H1 (cell line): ENCODE measurements at regions of chr11 and their contacts with region 1.

Region 1: DNA sequence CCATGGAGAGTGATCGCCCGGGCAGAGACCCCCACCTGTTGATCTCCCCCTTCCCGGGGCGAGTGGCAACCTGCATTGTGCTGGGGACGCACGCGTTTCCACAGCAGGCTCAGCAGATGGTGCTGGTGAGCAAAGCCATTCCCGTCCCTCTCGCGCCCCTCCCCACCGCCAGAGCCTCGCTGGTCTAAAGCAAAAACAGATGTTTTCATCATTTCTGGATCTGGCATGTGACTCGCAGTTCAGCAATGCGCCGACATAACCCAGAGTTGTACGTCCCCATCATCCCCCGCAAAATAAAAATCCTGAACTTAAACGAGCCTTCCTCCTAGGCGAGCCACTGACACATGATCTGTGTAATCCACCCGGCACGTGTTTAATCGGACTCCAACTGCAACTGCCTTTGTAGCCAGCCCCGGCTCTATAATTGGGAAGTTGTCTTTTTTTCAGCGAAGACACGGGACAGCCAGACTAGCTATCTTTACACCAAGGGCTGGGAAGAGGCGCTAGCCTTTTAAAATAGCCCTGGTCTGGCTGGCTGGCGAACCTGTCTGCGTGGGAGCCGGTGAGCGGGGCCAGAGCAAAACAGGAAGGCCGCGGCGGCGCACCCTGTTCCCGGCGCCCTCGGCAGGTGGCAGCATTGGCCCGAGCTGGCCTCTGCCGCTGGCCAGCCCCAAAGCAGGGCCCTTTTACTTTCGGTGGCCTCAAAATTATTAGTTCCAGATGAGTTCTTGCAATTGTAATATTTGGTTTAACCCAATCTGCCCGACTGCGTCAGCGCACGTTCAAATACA is 203.0 kb upstream of the SORL1-AS1 start:
- DNase-seq: peak in 1 of 2 experiments; percentile 94
- H3K4me3 ChIP-seq: peak overlapping the region; percentile 19 to 60 (median 34); a peak in 7 of 8 replicates
- H3K27ac ChIP-seq: no peak overlapping the region
- H3K4me1 ChIP-seq: peaks cover 7 to 13% (median 11%) of the 10 kb centered on the region in 4 experiments
- H3K27me3 ChIP-seq: no peaks in the 10 kb centered on the region
- CTCF ChIP-seq: peak; percentile 85 to 97 (median 90)
- EP300 ChIP-seq: no peak
- POLR2A ChIP-seq: no peak
- RAD21 ChIP-seq: peak; percentile 97 to 98

Region 2: GRCh38 chr11:121757480-121758125 is 101.9 kb after region 1 on chr11:
- CTCF ChIA-PET with region 1: interaction called, 28 read pairs
- POLR2A ChIA-PET with region 1: no interaction called
- DNase-seq: no peak
- H3K4me3 ChIP-seq: no peak overlapping the region
- H3K27ac ChIP-seq: no peak overlapping the region
- H3K4me1 ChIP-seq: peaks cover 2 to 11% (median 8%) of the 10 kb centered on the region in 4 experiments; a peak in 6 of 7 replicates
- H3K27me3 ChIP-seq: no peaks in the 10 kb centered on the region
- CTCF ChIP-seq: no peak
- EP300 ChIP-seq: no peak
- POLR2A ChIP-seq: no peak
- RAD21 ChIP-seq: peak in 1 of 2 experiments; percentile 30; a peak in 2 of 4 replicates

Region 3: DNA sequence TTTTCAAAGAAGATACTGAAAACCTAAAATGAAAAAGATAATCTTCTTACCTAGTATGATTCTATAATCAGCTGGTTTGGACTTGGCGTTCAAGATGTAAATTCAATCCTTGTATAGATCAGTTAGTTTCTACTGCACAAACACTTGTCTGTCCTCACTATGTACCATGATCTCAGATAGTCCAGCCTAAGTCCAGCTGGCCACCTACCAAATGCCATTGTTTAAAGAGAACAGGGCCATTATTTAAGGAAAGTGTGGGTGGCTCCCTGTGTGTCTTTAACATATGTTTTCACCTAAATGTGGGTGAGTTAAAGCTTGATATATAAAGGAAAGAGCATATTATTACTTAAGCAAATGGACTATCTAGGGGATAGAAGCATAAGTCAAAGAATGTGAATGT is 421.7 kb after region 1 on chr11:
- CTCF ChIA-PET with region 1: interaction called, 15 read pairs
- POLR2A ChIA-PET with region 1: no interaction called
- DNase-seq: no peak
- H3K4me3 ChIP-seq: no peak overlapping the region
- H3K27ac ChIP-seq: no peak overlapping the region
- H3K4me1 ChIP-seq: no peaks in the 10 kb centered on the region
- H3K27me3 ChIP-seq: peaks cover 0 to 1% (median 0%) of the 10 kb centered on the region in 4 experiments; a peak in 1 of 7 replicates
- CTCF ChIP-seq: no peak
- EP300 ChIP-seq: no peak
- POLR2A ChIP-seq: no peak
- RAD21 ChIP-seq: no peak

Region 4: GRCh38 chr11:122115524-122116379 is 460.0 kb after region 1 on chr11 and contains the start of gene BLID:
- CTCF ChIA-PET with region 1: interaction called, 14 read pairs
- POLR2A ChIA-PET with region 1: no interaction called
- DNase-seq: peak in 1 of 2 experiments; percentile 74
- H3K4me3 ChIP-seq: no peak within 1 kb of the TSS
- H3K27ac ChIP-seq: no peak within 1 kb of the TSS
- H3K4me1 ChIP-seq: peaks cover 0 to 3% (median 0%) of the 10 kb centered on the region in 4 experiments; a peak in 1 of 7 replicates
- H3K27me3 ChIP-seq: no peaks in the 10 kb centered on the region; a peak in 1 of 7 replicates
- CTCF ChIP-seq: peak; percentile 60 to 91 (median 75)
- EP300 ChIP-seq: no peak
- POLR2A ChIP-seq: no peak
- RAD21 ChIP-seq: peak; percentile 63 to 64
- total RNA-seq, gene BLID: not detected in 2 replicates

Region 5: GRCh38 chr11:122202951-122203456 is 547.3 kb after region 1 on chr11:
- CTCF ChIA-PET with region 1: interaction called, 43 read pairs
- POLR2A ChIA-PET with region 1: no interaction called
- DNase-seq: peak; percentile 34 to 91
- H3K4me3 ChIP-seq: peak overlapping the region in 3 of 4 experiments; percentile 13 to 39 (median 21); a peak in 3 of 8 replicates
- H3K27ac ChIP-seq: no peak overlapping the region
- H3K4me1 ChIP-seq: peaks cover 0 to 4% (median under 1%) of the 10 kb centered on the region in 4 experiments; a peak in 2 of 7 replicates
- H3K27me3 ChIP-seq: no peaks in the 10 kb centered on the region
- CTCF ChIP-seq: peak; percentile 93 to 98 (median 94)
- EP300 ChIP-seq: no peak
- POLR2A ChIP-seq: no peak
- RAD21 ChIP-seq: peak; percentile 96 to 98